HepG2 (cell line): ENCODE measurements at regions of chr15 and their contacts with region 1.

Region 1: DNA sequence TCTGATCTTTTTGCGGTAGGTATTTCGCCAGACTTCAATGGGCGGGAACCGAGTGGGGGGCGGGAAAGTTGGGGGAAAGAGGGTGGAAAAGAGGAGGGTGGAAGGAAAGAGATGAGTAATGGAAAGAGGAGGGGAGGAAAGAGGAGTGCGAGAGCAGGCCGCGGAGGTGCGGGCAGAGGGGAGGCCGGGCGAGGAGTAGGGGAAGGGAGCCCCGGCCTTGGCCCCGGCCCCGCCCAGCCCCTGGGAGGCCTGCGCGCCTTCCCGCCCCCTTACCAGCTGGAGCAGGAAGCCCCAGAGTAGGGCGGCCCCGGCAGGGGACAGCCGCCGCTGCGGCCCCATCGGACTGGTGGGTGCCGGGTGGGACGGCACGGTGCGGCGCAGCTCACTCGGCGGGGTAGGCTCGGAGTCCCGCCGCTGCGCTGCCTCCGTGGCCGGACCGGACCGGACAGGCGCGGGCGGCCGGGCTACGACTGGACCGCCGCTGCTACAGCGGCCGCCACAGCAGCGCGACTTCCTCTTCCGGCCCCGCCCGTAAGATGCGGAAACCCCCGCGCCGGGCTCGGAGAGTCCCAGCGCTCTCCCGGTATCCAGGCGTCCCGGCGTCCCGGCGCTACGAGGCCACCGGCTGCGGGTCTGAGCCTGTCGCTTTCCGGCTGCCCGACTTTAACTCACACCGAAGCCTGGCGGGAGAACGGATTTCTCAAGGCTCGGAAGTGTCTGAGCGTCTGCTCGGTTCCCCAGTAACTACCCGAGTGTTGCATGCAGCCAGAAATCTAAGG is at the start of gene SPPL2A:
- DNase-seq: peak; percentile 89
- ATAC-seq: peak; percentile 91
- H3K4me3 ChIP-seq: peak within 1 kb of the TSS; percentile 68 to 94 (median 90)
- H3K27ac ChIP-seq: peak within 1 kb of the TSS; percentile 91
- H3K4me1 ChIP-seq: peaks cover 47% of the 10 kb centered on the region
- H3K27me3 ChIP-seq: no peaks in the 10 kb centered on the region; a peak in 1 of 5 replicates
- CTCF ChIP-seq: no peak
- EP300 ChIP-seq: peak in 1 of 2 experiments; percentile 71; a peak in 2 of 4 replicates
- POLR2A ChIP-seq: peak; percentile 81 to 82
- RAD21 ChIP-seq: peak; percentile 64; the same call in 1 of the 2 replicates
- total RNA-seq, gene SPPL2A: 69.9 and 105 TPM in 2 replicates

Region 2: GRCh38 chr15:50686468-50687301 is 78.7 kb before region 1 on chr15 and contains the start of gene TRPM7:
- CTCF ChIA-PET with region 1: no interaction called
- POLR2A ChIA-PET with region 1: interaction called, 4 read pairs
- in situ Hi-C with region 1: no loop called
- intact Hi-C with region 1: loop called (anchors 5 kb)
- DNase-seq: peak; percentile 73
- ATAC-seq: peak; percentile 90
- H3K4me3 ChIP-seq: peak within 1 kb of the TSS; percentile 65 to 90 (median 86)
- H3K27ac ChIP-seq: peak within 1 kb of the TSS; percentile 94
- H3K4me1 ChIP-seq: peaks cover 45% of the 10 kb centered on the region
- H3K27me3 ChIP-seq: no peaks in the 10 kb centered on the region; a peak in 1 of 5 replicates
- CTCF ChIP-seq: no peak; the same call in 1 of the 2 replicates
- EP300 ChIP-seq: peak in 1 of 2 experiments; percentile 0; a peak in 1 of 4 replicates
- POLR2A ChIP-seq: peak; percentile 83 to 84
- RAD21 ChIP-seq: no peak; the same call in 1 of the 2 replicates
- total RNA-seq, gene TRPM7: 31.7 and 36.0 TPM in 2 replicates

Region 3: GRCh38 chr15:50876989-50877360 is 111.6 kb after region 1 on chr15:
- CTCF ChIA-PET with region 1: no interaction called
- POLR2A ChIA-PET with region 1: interaction called, 3 read pairs
- in situ Hi-C with region 1: no loop called
- intact Hi-C with region 1: loop called (anchors 2 kb)
- DNase-seq: peak; percentile 78
- ATAC-seq: peak; percentile 69
- H3K4me3 ChIP-seq: peak overlapping the region; percentile 41 to 64 (median 55)
- H3K27ac ChIP-seq: no peak overlapping the region
- H3K4me1 ChIP-seq: peaks cover 38% of the 10 kb centered on the region; the same call in 1 of the 2 replicates
- H3K27me3 ChIP-seq: 0 out of 5 replicates have a peak, but pooled peaks cover 0 to 5% of the 10 kb centered on the region in 2 experiments
- CTCF ChIP-seq: peak; percentile 94
- EP300 ChIP-seq: no peak
- POLR2A ChIP-seq: no peak
- RAD21 ChIP-seq: peak; percentile 86